Dorsolateral prefrontal cortex (tissue), 120 donors: ENCODE measurements at regions of chr19 and their contacts with region 1.

Region 1: DNA sequence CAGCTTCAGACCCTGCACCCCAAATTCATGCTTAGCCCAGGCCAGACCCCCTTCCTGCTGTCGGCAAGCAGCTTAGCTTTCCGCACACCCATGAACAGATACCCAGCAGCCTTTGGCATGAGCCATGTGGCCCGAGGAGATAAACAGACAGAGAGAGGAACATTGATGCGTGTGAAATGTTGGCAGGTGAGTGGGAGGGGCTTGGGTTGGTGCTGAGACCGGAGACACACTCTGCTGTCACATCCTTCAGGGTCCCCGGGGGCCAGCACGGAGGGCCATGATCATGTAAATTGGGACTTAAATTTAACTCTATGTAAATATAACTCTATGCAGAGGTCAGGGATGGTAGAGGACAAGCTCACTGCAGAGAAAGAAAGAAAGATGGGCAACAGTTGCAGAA is 1.5 kb downstream of the CD22 start:
- DNase-seq: no peak
- H3K4me3 ChIP-seq: no peak overlapping the region
- H3K27ac ChIP-seq: no peak overlapping the region
- H3K27me3 ChIP-seq: peaks cover 0 to 8% (median 0%) of the 10 kb centered on the region in 45 donors
- CTCF ChIP-seq: no peak

Region 2: GRCh38 chr19:35262101-35262761 is 68.2 kb before region 1 on chr19:
- intact Hi-C with region 1: no loop called
- DNase-seq: peak in 6 of 10 donors; percentile 9 to 44 (median 30)
- H3K4me3 ChIP-seq: no peak overlapping the region
- H3K27ac ChIP-seq: peak overlapping the region in 43 of 59 donors; percentile 2 to 98 (median 41)
- H3K27me3 ChIP-seq: no peaks in the 10 kb centered on the region
- CTCF ChIP-seq: no peak

Region 3: GRCh38 chr19:35318650-35319448 is 11.6 kb before region 1 on chr19:
- intact Hi-C with region 1: no loop called
- DNase-seq: peak in 9 of 10 donors; percentile 62 to 90 (median 83)
- H3K4me3 ChIP-seq: peak overlapping the region in 1 of 59 donors; percentile 17
- H3K27ac ChIP-seq: peak overlapping the region; percentile 27 to 98 (median 88)
- H3K27me3 ChIP-seq: no peaks in the 10 kb centered on the region
- CTCF ChIP-seq: peak in 1 of 56 donors; percentile 5

Region 4: DNA sequence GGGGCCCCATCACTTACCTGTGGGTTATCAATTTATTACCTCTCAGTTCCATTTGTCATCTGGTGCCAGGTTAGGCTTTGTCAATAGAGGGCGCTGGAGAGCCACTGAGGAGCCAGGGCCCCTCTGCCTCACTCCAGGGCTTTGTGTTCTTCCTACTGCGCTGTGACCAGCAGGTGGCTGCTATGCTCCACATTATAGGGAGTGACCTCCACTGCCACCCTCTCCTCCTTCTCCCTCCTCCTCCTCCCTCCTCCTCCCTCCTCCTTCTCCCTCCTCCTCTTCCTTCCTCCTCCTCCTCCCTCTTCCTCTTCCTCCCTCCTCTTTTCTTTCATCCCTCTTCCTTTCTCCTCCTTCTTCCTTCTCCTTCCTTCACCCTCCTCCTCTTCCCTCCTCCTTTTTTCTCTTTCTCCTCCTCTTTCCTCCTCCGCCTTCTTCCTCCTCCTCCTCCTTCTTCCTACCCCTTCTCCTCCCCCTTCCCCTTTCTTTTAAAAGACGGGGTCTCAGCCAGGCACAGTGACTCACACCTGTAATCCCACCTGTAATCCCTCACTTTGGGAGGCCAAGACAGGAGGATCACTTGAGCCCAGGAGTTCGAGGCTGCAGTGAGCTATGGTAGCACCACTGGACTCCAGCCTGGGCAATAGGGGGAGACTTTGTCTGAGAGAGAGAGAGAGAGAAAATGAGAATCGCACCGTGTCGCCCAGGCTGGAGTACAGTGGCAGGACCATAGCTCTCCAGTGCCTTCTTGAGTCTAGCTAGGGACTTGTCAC is 363.5 kb after region 1 on chr19:
- intact Hi-C with region 1: loop called in 1 of 2 experiments (anchors 10 kb)
- DNase-seq: peak; percentile 74 to 91 (median 86)
- H3K4me3 ChIP-seq: peak overlapping the region in 5 of 59 donors; percentile 4 to 26 (median 20)
- H3K27ac ChIP-seq: no peak overlapping the region
- H3K27me3 ChIP-seq: no peaks in the 10 kb centered on the region
- CTCF ChIP-seq: peak; percentile 85 to 100 (median 96)